ENCODE measurements at regions of chr12 and their contacts with region 1.

Region 1: DNA sequence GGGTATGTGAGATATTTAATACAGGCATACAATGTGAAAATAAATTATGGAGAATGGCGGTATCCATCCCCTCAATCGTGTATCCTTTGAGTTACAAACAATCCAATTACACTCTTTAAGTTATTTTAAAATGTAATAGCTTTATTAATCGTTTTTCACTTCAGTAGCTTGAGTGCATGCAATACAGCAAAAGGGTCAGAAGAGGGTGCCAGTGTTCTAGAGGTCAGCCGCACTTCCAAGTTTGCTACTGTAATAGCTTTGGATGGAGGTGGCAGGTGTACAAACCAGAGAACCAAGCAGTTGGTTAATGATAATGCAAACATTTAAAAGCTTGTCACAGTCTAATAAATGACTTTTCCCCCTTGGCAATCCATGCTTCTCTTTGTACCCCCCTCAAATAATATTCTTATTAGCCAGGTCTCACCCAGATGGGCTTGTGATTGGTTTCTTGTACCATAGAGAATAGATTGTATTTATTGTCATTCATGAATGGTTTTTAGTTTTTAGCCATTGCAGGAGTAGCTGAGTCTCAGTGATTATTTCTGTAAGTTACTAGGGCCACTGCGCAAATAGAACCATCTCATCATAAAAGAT is 127.0 kb downstream of the ERC1 start:
- DNase-seq: peak; percentile 48 to 83 (median 74)
- ATAC-seq: peak; percentile 52
- H3K4me3 ChIP-seq: no peak overlapping the region
- H3K4me3 Mint-ChIP-seq: no peak overlapping the region
- H3K27ac ChIP-seq: no peak overlapping the region
- H3K27ac Mint-ChIP-seq: no peak overlapping the region
- H3K4me1 ChIP-seq: peaks cover 7% of the 10 kb centered on the region
- H3K4me1 Mint-ChIP-seq: peaks cover 7% of the 10 kb centered on the region
- H3K27me3 ChIP-seq: no peaks in the 10 kb centered on the region
- H3K27me3 Mint-ChIP-seq: no peaks in the 10 kb centered on the region
- CTCF ChIP-seq: peak; percentile 98

Region 2: GRCh38 chr12:968545-968944 is 149.5 kb before region 1 on chr12:
- CTCF ChIA-PET with region 1: no interaction called
- POLR2A ChIA-PET with region 1: no interaction called
- intact Hi-C with region 1: no loop called
- DNase-seq: no peak
- ATAC-seq: no peak
- H3K4me3 ChIP-seq: no peak overlapping the region
- H3K4me3 Mint-ChIP-seq: no peak overlapping the region
- H3K27ac ChIP-seq: no peak overlapping the region
- H3K27ac Mint-ChIP-seq: no peak overlapping the region
- H3K4me1 ChIP-seq: no peaks in the 10 kb centered on the region
- H3K4me1 Mint-ChIP-seq: no peaks in the 10 kb centered on the region
- H3K27me3 ChIP-seq: no peaks in the 10 kb centered on the region
- H3K27me3 Mint-ChIP-seq: no peaks in the 10 kb centered on the region
- CTCF ChIP-seq: no peak

Region 3: GRCh38 chr12:1130164-1130563 is 12.1 kb after region 1 on chr12:
- CTCF ChIA-PET with region 1: interaction called, 20 read pairs
- POLR2A ChIA-PET with region 1: interaction called, 4 read pairs
- intact Hi-C with region 1: no loop called
- DNase-seq: peak in 2 of 9 experiments; percentile 7 to 12
- ATAC-seq: no peak
- H3K4me3 ChIP-seq: no peak overlapping the region
- H3K4me3 Mint-ChIP-seq: no peak overlapping the region
- H3K27ac ChIP-seq: no peak overlapping the region
- H3K27ac Mint-ChIP-seq: no peak overlapping the region
- H3K4me1 ChIP-seq: peaks cover 12% of the 10 kb centered on the region
- H3K4me1 Mint-ChIP-seq: peaks cover 41% of the 10 kb centered on the region
- H3K27me3 ChIP-seq: no peaks in the 10 kb centered on the region
- H3K27me3 Mint-ChIP-seq: no peaks in the 10 kb centered on the region
- CTCF ChIP-seq: no peak

Region 4: DNA sequence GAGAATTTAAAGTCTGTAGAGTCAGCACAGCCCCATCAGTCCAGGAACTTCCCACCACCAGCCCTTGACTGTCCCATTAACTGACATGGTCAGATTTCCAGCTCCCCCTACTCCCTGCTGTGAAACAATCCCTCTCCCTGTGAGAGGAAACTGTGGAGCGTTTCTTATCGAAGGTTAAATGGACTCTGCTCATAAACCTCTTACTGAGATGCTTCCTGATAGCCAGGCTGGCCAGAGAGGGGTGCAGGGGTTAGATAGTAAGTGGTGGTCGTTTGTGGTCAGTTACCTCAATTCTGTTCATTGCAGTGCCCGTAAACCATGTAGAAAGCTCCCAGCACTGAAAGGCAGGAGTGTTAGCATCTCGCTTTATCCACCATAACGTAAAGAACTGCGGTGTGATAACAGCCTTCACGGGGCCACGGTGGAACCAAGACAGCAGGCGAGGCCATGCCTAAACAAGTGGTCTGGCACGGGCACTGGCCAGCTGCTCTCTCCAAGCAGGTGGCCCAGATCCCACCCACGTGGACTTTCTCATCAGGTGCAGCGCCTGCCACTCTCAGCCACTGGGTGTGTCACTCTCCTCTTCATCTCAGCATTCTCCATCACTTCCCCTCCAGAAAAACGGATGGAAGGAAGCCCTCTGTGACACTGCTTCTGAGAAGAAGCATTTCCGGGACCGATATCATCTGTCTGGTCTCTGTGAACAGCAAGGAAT is 374.1 kb after region 1 on chr12:
- CTCF ChIA-PET with region 1: interaction called, 6 read pairs
- POLR2A ChIA-PET with region 1: interaction called, 3 read pairs
- intact Hi-C with region 1: loop called in 1 of 2 experiments (anchors 1 kb)
- DNase-seq: no peak
- ATAC-seq: no peak
- H3K4me3 ChIP-seq: no peak overlapping the region
- H3K4me3 Mint-ChIP-seq: no peak overlapping the region
- H3K27ac ChIP-seq: no peak overlapping the region
- H3K27ac Mint-ChIP-seq: no peak overlapping the region
- H3K4me1 ChIP-seq: peaks cover 23% of the 10 kb centered on the region
- H3K4me1 Mint-ChIP-seq: peaks cover 24% of the 10 kb centered on the region
- H3K27me3 ChIP-seq: no peaks in the 10 kb centered on the region
- H3K27me3 Mint-ChIP-seq: no peaks in the 10 kb centered on the region
- CTCF ChIP-seq: no peak

Region 5: DNA sequence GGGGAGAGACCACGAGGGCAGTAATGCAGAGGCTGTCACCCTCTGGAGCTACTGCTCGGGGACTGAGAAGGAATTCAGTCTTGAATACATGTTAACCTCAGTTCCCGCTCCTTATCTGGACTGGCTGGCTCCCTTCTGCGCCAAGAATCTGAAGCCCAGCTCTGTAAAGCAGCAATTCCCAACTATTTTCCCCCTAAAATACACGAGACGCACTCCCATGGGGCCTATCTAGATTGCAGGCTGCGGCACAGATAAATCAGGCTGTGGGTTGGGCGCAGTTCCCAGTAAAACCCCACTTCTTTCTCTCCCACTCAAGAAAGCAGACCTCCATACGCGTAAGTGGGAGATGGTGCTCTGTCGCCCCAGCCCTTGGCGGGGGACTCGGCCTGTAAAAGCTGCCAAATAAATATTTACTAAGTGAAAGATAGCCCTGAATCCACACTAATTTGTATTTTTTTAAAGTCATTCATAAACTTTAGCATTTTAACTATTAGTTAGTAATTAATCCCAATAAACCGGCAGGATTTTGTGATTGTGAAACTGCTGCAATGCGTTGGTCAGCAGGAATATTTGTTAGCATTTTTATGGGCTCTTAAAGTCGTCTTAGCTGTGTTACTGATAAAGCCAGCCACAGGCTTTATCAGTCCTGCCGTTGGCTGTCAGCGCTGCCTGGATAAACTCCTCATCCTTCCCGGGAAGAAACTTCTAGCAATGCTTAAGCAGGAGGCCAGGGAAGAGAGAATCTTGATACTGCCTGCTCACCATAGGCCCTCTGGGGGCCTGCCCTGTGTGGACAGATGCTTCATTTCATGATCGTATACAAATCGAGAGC is 458.6 kb after region 1 on chr12:
- CTCF ChIA-PET with region 1: interaction called, 184 read pairs
- POLR2A ChIA-PET with region 1: no interaction called
- intact Hi-C with region 1: no loop called
- DNase-seq: no peak
- ATAC-seq: no peak
- H3K4me3 ChIP-seq: no peak overlapping the region
- H3K4me3 Mint-ChIP-seq: no peak overlapping the region
- H3K27ac ChIP-seq: no peak overlapping the region
- H3K27ac Mint-ChIP-seq: no peak overlapping the region
- H3K4me1 ChIP-seq: no peaks in the 10 kb centered on the region
- H3K4me1 Mint-ChIP-seq: no peaks in the 10 kb centered on the region
- H3K27me3 ChIP-seq: no peaks in the 10 kb centered on the region
- H3K27me3 Mint-ChIP-seq: peaks cover 2% of the 10 kb centered on the region
- CTCF ChIP-seq: no peak

Region 6: DNA sequence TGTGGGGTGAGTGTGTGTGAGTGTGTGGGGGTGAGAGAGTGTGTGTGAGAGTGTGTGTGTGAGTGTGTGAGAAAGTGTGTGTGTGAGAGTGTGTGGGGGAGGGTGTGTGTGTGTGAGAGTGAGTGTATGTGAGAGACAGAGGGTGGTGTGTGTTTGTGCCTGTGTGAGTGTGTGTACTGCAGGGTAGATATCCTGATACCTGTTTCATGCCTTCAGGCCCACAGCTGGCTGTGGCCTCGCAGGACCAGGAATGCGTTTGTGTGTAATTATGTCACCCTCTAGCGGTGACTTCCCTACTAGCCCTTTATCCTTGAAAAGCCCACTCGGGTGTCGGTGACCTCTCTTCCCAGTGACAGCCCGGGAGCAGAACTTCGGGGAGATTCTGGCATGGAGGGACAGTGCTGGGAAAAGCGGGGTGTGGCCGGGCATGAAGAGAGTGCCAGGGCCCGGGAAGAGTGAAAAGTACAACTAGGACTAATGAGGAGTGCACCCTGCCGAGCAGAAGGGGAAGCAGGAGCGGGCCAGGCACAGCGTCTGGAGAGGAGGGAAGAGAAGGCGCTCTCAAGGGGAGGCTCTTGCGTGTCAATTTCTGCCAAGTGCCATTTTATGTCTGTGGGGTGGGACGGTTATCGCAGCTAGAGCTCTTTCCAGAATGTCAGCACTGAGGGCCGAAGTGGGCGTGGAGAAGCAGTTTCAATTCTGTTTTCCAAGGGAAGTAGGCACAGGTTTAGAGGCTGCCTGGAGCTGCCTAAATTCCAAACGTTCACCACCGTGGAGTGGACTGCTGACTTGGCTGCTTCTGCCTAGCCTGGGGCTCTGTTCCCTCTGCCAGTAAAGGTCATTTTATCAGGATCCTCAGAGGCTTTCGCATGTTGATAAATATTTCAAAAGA is 487.3 kb after region 1 on chr12:
- CTCF ChIA-PET with region 1: interaction called, 66 read pairs
- POLR2A ChIA-PET with region 1: interaction called, 7 read pairs
- intact Hi-C with region 1: loop called (anchors 1 kb)
- DNase-seq: peak in 8 of 9 experiments; percentile 32 to 86 (median 64)
- ATAC-seq: peak; percentile 70
- H3K4me3 ChIP-seq: peak overlapping the region; percentile 36 to 37
- H3K4me3 Mint-ChIP-seq: peak overlapping the region; percentile 86
- H3K27ac ChIP-seq: no peak overlapping the region
- H3K27ac Mint-ChIP-seq: peak overlapping the region; percentile 24
- H3K4me1 ChIP-seq: peaks cover 23% of the 10 kb centered on the region
- H3K4me1 Mint-ChIP-seq: peaks cover 31% of the 10 kb centered on the region
- H3K27me3 ChIP-seq: no peaks in the 10 kb centered on the region
- H3K27me3 Mint-ChIP-seq: no peaks in the 10 kb centered on the region
- CTCF ChIP-seq: peak; percentile 64